Right ventricle myocardium superior (tissue), 1 donor: ENCODE measurements at regions of chr12 and their contacts with region 1.

Region 1: GRCh38 chr12:53352331-53353256 is 16.4 kb upstream of the SP7 start:
- DNase-seq: peak; percentile 73
- ATAC-seq: peak; percentile 97

Region 2: DNA sequence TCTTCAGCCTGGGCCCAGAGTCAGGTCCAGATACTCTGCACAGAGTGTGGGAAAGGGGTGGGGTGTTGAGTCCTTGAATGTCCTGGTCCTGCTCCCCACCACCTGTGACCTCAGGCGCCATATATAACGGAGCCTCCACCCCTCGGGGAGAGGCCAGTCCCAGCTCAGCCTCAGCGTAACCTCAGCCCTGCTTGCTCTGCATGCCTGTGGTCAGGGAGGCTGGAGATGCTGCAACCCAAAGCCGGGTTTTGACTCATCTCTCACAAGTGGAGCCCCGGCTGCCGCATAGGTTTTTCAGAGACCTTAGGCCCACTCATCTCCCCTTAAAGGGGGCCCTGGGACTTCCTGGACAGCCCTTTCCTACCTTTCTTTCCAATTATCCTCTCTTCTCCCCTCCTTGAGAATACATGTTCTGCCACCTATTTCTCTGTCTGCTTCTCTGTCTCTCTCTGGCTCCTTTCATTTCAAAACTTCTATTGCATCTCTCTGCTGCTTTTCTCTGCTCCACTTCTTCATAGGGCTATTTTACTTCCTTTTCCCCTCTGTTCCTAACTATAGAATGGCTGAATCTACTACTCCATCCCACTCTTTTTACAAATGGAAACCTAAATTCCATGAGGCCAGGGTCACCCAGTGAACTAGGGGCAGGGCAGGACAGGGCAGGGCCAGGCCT is 146.7 kb before region 1 on chr12:
- intact Hi-C with region 1: no loop called
- DNase-seq: peak; percentile 45
- ATAC-seq: no peak

Region 3: DNA sequence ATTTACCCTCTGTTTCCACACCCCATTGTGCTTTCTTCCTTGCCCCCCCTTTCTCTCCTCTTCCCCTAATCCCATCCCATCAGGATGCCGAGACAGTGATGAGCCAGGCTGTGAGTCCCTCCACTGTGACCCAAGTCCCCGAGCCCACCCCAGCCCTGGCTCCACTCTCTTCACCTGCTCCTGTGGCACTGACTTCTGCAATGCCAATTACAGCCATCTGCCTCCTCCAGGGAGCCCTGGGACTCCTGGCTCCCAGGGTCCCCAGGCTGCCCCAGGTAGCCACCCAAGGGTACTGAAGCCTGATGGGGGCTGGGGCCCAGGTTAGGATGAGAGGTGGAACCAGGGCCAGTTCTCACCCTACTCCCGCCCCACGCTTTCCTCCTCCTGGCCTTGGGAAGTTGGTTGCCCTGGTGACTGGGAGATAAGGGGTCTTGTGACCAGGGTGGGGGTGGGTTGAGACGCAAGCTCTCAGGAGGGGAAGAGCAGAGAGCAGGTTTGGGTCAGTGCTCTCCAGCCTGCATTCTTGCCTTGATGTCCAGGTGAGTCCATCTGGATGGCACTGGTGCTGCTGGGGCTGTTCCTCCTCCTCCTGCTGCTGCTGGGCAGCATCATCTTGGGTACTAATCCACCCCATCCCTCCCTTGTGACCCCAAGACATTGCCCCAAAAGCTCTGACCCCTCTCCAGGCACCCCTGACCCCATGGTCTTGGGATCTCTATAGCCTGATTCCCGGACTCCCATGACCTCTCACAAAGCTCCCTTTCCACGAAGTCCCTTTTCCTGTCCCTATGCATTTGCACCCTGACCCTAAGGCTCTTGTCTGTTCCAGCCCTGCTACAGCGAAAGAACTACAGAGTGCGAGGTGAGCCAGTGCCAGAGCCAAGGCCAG is 72.3 kb after region 1 on chr12:
- intact Hi-C with region 1: loop called (anchors 1 kb)
- DNase-seq: no peak
- ATAC-seq: no peak

Region 4: DNA sequence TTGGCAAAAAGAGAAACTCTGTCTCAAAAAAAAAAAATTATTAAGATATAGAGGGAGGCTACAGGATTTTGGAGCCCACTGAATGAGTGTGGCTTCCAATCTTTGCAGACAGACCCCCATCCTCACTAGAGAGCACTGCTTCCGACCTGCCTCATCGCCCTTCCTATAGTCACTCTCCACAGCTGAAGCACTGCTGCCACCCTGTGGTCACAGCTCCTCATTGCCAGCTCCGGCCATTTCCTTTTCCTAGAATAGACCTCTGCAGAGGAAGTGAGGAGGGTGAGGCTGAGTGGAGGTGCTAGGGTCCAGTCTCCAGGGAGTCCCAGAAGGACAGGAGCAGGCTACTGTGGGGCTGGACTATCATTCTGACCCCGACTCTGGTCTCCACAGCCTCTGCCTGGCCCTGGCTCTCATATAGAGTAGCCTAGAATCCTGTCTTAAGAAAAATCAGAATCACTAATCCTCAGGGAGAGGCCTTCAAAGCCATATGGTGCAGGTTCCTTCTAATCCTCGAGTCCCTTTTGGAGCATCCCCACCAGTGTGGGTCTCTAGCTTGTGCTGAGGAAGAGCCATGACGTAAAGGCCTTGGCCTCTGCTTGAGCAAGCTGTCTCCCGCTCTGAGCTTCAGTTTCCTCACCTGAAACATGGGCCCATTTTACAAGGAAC is 156.1 kb after region 1 on chr12:
- intact Hi-C with region 1: loop called (anchors 2 kb)
- DNase-seq: peak; percentile 89
- ATAC-seq: peak; percentile 85